ENCODE measurements at regions of chr11 and their contacts with region 1.

Region 1: DNA sequence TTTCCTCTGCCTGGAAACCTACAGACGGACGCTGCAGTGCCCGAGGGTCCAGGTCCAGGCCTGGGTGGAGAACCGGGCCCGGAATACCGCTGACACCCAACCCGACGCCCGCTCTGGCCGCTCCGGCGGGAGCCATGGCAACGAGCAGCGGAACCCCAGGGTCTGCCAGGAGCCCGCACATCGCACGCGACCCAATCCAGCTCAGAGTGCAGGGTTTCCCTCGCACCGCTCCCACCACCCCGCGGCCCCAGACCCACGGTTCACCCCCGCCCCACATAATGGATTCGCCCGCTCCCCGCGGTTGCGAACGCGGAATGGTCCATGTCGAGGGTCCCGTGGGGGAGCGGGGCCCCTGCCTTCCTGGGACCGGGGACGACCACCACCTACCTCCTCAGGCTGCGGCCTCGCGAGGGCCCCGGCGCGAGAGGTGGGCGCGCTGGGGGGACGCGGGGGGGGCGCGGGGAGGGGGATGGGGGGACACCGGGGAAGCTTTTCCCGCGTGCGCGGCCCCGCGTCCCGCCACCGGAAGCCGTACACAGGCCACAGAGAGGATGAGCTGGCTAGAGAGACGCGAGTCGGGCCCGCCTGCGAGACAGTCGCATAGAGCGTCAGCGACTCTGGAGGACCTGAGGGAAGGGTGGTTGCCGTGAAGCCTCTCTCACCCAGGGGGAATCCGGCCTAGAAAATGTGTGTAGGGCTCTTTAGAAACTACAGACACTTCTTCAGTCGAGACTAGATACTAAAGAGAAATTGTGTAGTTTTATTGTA is at the start of gene SSRP1:
- DNase-seq: peak; percentile 93
- H3K4me3 Mint-ChIP-seq: peak within 1 kb of the TSS; percentile 91
- H3K27ac Mint-ChIP-seq: peak within 1 kb of the TSS; percentile 99
- H3K4me1 Mint-ChIP-seq: peaks cover 41% of the 10 kb centered on the region
- H3K27me3 Mint-ChIP-seq: no peaks in the 10 kb centered on the region
- total RNA-seq, gene SSRP1: 304 to 322 TPM

Region 2: DNA sequence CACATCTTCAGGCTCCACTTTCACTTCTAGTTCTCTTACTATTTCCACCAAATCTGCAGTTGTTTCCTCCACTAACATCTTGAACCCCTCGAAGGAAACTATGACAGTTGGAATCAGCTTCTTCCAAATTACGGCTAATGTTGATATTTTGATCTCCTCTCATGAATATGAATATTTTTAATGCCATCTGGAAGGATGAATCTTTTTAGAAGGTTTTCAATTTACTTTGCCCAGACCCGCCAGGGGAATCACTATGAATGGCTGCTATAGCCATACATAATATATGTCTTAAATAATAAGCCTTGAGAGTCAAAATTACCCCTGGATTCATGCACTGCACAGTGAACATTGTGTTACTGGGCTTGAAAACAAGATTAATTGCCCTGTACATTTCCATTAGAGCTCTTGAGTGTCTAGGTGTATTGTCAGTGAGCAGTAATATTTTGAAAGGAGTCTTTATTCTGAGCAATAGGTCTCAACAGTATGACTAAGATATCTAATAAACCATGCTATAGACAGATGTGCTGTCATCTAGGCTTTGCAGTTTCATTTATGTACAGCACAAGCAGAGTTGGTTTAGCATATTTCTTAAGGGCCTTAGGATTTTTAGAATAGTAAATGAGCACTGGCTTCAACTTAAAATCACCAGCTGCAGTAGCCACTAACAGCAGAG is 202.0 kb before region 1 on chr11:
- CTCF ChIA-PET with region 1: no interaction called
- intact Hi-C with region 1: no loop called
- DNase-seq: no peak
- H3K4me3 Mint-ChIP-seq: no peak overlapping the region
- H3K27ac Mint-ChIP-seq: no peak overlapping the region
- H3K4me1 Mint-ChIP-seq: no peaks in the 10 kb centered on the region
- H3K27me3 Mint-ChIP-seq: peaks cover 4% of the 10 kb centered on the region

Region 3: GRCh38 chr11:57311109-57311936 is 24.2 kb before region 1 on chr11:
- CTCF ChIA-PET with region 1: interaction called, 3 read pairs
- intact Hi-C with region 1: loop called (anchors 1 kb)
- DNase-seq: peak; percentile 89
- H3K4me3 Mint-ChIP-seq: no peak overlapping the region
- H3K27ac Mint-ChIP-seq: no peak overlapping the region
- H3K4me1 Mint-ChIP-seq: peaks cover 17% of the 10 kb centered on the region
- H3K27me3 Mint-ChIP-seq: no peaks in the 10 kb centered on the region

Region 4: GRCh38 chr11:57324886-57325734 is 10.4 kb before region 1 on chr11 and contains the start of gene TNKS1BP1:
- CTCF ChIA-PET with region 1: interaction called, 10 read pairs
- intact Hi-C with region 1: loop called (anchors 1 kb)
- DNase-seq: peak; percentile 95
- H3K4me3 Mint-ChIP-seq: peak within 1 kb of the TSS; percentile 82
- H3K27ac Mint-ChIP-seq: peak within 1 kb of the TSS; percentile 94
- H3K4me1 Mint-ChIP-seq: peaks cover 56% of the 10 kb centered on the region
- H3K27me3 Mint-ChIP-seq: no peaks in the 10 kb centered on the region
- total RNA-seq, gene TNKS1BP1: 14.1 to 14.7 TPM

Region 5: GRCh38 chr11:57406337-57406904 is 70.9 kb after region 1 on chr11:
- CTCF ChIA-PET with region 1: no interaction called
- intact Hi-C with region 1: loop called (anchors 5 kb)
- DNase-seq: peak; percentile 75
- H3K4me3 Mint-ChIP-seq: no peak overlapping the region
- H3K27ac Mint-ChIP-seq: peak overlapping the region; percentile 78
- H3K4me1 Mint-ChIP-seq: peaks cover 60% of the 10 kb centered on the region
- H3K27me3 Mint-ChIP-seq: no peaks in the 10 kb centered on the region

Region 6: GRCh38 chr11:57657194-57658022 is 321.9 kb after region 1 on chr11 and contains the start of gene CLP1:
- CTCF ChIA-PET with region 1: no interaction called
- intact Hi-C with region 1: loop called (anchors 1 kb)
- DNase-seq: peak; percentile 100
- H3K4me3 Mint-ChIP-seq: peak within 1 kb of the TSS; percentile 92
- H3K27ac Mint-ChIP-seq: peak within 1 kb of the TSS; percentile 90
- H3K4me1 Mint-ChIP-seq: peaks cover 34% of the 10 kb centered on the region
- H3K27me3 Mint-ChIP-seq: no peaks in the 10 kb centered on the region
- total RNA-seq, gene CLP1: 11.3 to 14.2 TPM

Region 7: GRCh38 chr11:57712256-57713150 is 377.0 kb after region 1 on chr11 and contains the start of gene TMX2:
- CTCF ChIA-PET with region 1: no interaction called
- intact Hi-C with region 1: loop called (anchors 1 kb)
- DNase-seq: peak; percentile 95
- H3K4me3 Mint-ChIP-seq: peak within 1 kb of the TSS; percentile 99
- H3K27ac Mint-ChIP-seq: peak within 1 kb of the TSS; percentile 92
- H3K4me1 Mint-ChIP-seq: peaks cover 50% of the 10 kb centered on the region
- H3K27me3 Mint-ChIP-seq: no peaks in the 10 kb centered on the region
- total RNA-seq, gene TMX2: 49.8 to 54.7 TPM